Esophagus muscularis mucosa (tissue), 4 donors: ENCODE measurements at regions of chr7 and their contacts with region 1.

Region 1: GRCh38 chr7:18086165-18087030 is 58.8 kb upstream of the PRPS1L1 start:
- DNase-seq: no peak
- H3K4me3 ChIP-seq: peak overlapping the region; percentile 85 to 94 (median 93)
- H3K27ac ChIP-seq: peak overlapping the region; percentile 84 to 91 (median 88)
- H3K4me1 ChIP-seq: peaks cover 6 to 41% (median 34%) of the 10 kb centered on the region in 4 donors
- H3K27me3 ChIP-seq: no peaks in the 10 kb centered on the region
- CTCF ChIP-seq: peak; percentile 10 to 48 (median 24)
- EP300 ChIP-seq: no peak
- POLR2A ChIP-seq: no peak

Region 2: GRCh38 chr7:18019573-18019972 is 66.8 kb before region 1 on chr7:
- intact Hi-C with region 1: no loop called
- DNase-seq: no peak
- H3K4me3 ChIP-seq: no peak overlapping the region
- H3K27ac ChIP-seq: peak overlapping the region in 3 of 4 donors; percentile 45 to 51 (median 51)
- H3K4me1 ChIP-seq: peaks cover 0 to 17% (median 5%) of the 10 kb centered on the region in 4 donors
- H3K27me3 ChIP-seq: no peaks in the 10 kb centered on the region
- CTCF ChIP-seq: no peak
- EP300 ChIP-seq: no peak
- POLR2A ChIP-seq: no peak

Region 3: DNA sequence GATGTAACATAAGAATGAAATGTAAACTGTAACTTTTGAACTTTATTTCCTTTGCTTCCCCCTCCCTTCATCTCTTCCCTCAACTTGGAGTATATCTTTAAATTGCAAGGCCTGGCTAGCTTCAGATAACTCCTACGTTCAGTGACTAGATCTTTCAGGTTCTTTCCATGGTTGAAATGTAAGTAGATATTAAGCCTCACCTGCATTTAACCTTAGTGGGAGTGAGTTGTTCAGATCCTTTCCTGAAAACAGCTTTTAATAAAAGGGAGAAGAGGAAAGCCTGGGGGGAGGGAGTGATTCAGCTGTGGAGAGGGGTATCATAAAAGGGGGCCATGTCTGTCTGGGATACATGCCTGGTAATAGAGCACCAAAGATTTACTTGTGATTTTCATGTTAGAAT is 39.8 kb before region 1 on chr7:
- intact Hi-C with region 1: no loop called
- DNase-seq: no peak
- H3K4me3 ChIP-seq: no peak overlapping the region
- H3K27ac ChIP-seq: no peak overlapping the region
- H3K4me1 ChIP-seq: no peaks in the 10 kb centered on the region
- H3K27me3 ChIP-seq: no peaks in the 10 kb centered on the region
- CTCF ChIP-seq: no peak
- EP300 ChIP-seq: no peak
- POLR2A ChIP-seq: no peak

Region 4: GRCh38 chr7:18221377-18222293 is 135.2 kb after region 1 on chr7:
- intact Hi-C with region 1: loop called (anchors 10 kb)
- DNase-seq: no peak
- H3K4me3 ChIP-seq: no peak overlapping the region
- H3K27ac ChIP-seq: peak overlapping the region; percentile 45 to 77 (median 57)
- H3K4me1 ChIP-seq: peaks cover 26 to 82% (median 63%) of the 10 kb centered on the region in 4 donors
- H3K27me3 ChIP-seq: no peaks in the 10 kb centered on the region
- CTCF ChIP-seq: no peak
- EP300 ChIP-seq: no peak
- POLR2A ChIP-seq: no peak